ENCODE measurements at regions of chr12 and their contacts with region 1.

Region 1: DNA sequence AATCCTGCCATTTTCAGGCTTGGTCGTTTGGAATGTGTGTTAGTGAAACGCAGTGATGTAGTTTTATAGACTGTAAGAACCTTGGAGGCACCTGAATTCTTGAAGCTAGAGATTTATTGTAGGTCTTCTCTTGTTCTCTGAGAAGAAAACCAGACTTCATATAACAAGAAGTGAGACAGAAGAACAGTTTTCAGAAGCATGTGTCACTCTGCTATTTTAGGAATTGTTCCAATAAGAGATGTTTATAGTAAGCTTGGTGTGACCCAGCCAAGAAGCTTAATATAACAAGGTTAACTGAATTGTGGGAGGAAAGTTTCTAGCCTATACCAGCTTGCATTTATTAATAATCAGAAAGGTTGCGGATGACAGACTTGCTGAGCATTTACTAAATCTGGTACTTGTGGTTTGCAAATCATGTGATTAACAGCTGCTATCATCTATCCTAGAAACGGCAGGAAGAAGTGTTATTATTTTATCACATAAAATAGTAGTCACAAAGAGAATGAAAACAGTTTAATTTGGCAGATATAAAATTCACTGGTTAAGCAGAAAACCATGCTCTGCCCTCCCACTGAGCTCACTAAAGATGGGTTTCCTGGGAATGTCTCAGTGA is 49.2 kb upstream of the BCAT1 start:
- DNase-seq: peak; percentile 77
- ATAC-seq: peak; percentile 79
- H3K4me3 ChIP-seq: peak overlapping the region in 2 of 5 experiments; percentile 1 to 59
- H3K4me3 Mint-ChIP-seq: peak overlapping the region; percentile 64
- H3K27ac ChIP-seq: peak overlapping the region; percentile 79 to 84
- H3K27ac Mint-ChIP-seq: peak overlapping the region; percentile 85
- H3K4me1 ChIP-seq: peaks cover 74 to 76% of the 10 kb centered on the region in 2 donors
- H3K4me1 Mint-ChIP-seq: peaks cover 81% of the 10 kb centered on the region
- H3K27me3 ChIP-seq: no peaks in the 10 kb centered on the region
- H3K27me3 Mint-ChIP-seq: no peaks in the 10 kb centered on the region
- CTCF ChIP-seq: no peak

Region 2: DNA sequence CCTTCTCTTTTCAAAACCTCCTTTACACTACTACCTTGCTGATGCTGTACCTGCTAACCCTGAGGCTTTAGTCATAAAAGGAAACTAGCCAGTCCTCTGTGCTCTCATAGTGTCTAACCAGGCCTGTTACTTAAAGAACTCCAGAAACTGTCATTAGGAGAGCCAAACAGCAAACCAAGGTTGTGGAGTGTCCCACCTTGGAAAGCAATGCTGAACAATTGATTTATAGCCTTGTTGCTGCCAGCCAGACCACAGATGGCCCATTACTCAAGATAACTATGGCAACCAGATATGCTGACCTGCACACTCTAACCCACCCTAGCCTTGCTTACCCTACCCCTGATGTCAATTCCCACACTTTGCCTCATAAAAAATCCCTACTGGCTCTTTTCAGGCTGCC is 22.7 kb before region 1 on chr12:
- CTCF ChIA-PET with region 1: no interaction called
- POLR2A ChIA-PET with region 1: no interaction called
- intact Hi-C with region 1: no loop called
- DNase-seq: no peak
- ATAC-seq: no peak
- H3K4me3 ChIP-seq: no peak overlapping the region
- H3K4me3 Mint-ChIP-seq: no peak overlapping the region
- H3K27ac ChIP-seq: no peak overlapping the region
- H3K27ac Mint-ChIP-seq: no peak overlapping the region
- H3K4me1 ChIP-seq: peaks cover 0 to 7% of the 10 kb centered on the region in 2 donors
- H3K4me1 Mint-ChIP-seq: peaks cover 2% of the 10 kb centered on the region
- H3K27me3 ChIP-seq: no peaks in the 10 kb centered on the region
- H3K27me3 Mint-ChIP-seq: no peaks in the 10 kb centered on the region
- CTCF ChIP-seq: no peak

Region 3: DNA sequence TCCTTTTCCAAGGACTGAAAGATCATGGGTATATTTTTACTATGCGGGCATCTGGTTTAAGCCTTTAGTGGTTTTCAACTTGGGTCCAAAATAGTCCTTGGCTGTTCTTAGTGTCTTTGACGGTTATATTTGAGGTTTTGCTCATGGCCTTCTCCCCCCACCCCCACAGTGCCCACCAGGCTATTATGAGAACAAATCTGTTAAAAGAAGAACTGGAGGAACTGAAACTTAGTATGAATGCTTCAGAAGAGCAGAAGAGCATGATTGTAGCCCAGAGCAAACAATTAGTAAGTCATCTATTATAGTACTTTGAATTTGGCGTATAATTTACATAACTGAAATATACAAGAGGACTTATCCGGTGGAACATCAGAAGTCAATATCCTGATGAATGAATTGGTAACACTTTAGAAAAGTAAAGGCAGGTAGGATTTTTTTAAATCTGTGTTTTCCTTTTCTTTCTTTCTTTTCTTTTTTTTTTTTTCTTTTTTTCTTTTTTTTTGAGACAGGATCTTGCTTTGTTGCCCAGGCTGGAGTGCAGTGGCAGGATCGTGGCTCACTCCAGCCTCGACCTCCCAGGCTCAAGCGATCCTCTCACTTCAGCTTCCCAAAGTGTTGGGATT is 22.7 kb after region 1 on chr12:
- CTCF ChIA-PET with region 1: interaction called, 7 read pairs
- POLR2A ChIA-PET with region 1: interaction called, 3 read pairs
- intact Hi-C with region 1: loop called (anchors 1 kb)
- DNase-seq: peak; percentile 67
- ATAC-seq: peak; percentile 86
- H3K4me3 ChIP-seq: peak overlapping the region in 2 of 5 experiments; percentile 8 to 37
- H3K4me3 Mint-ChIP-seq: peak overlapping the region; percentile 67
- H3K27ac ChIP-seq: peak overlapping the region; percentile 59 to 68
- H3K27ac Mint-ChIP-seq: peak overlapping the region; percentile 81
- H3K4me1 ChIP-seq: peaks cover 69 to 72% of the 10 kb centered on the region in 2 donors
- H3K4me1 Mint-ChIP-seq: peaks cover 58% of the 10 kb centered on the region
- H3K27me3 ChIP-seq: no peaks in the 10 kb centered on the region
- H3K27me3 Mint-ChIP-seq: no peaks in the 10 kb centered on the region
- CTCF ChIP-seq: no peak

Region 4: DNA sequence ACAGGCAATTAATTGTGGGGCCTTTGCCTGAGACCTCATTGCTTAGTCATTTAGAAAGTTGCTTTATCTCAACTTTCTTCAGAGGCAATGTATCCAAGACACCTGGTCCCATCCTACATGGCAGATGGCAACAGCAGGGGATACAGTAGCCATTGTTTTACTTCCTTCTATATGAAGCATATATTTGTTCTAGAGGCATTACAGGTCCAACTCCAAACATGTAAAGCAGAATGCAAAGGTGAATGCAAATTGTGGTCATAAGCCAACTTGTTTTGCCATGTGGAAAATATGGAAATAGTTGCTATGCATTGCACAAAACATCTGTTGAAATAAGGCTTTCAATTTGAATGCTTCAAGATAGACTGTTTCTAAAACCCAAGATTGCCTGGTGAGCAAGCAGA is 60.6 kb after region 1 on chr12:
- CTCF ChIA-PET with region 1: interaction called, 53 read pairs
- POLR2A ChIA-PET with region 1: interaction called, 14 read pairs
- intact Hi-C with region 1: no loop called
- DNase-seq: peak; percentile 40
- ATAC-seq: peak; percentile 40
- H3K4me3 ChIP-seq: peak overlapping the region in 2 of 5 experiments; percentile 17 to 36
- H3K4me3 Mint-ChIP-seq: peak overlapping the region; percentile 79
- H3K27ac ChIP-seq: peak overlapping the region in 1 of 2 donors; percentile 65
- H3K27ac Mint-ChIP-seq: peak overlapping the region; percentile 85
- H3K4me1 ChIP-seq: peaks cover 63 to 71% of the 10 kb centered on the region in 2 donors
- H3K4me1 Mint-ChIP-seq: peaks cover 82% of the 10 kb centered on the region
- H3K27me3 ChIP-seq: no peaks in the 10 kb centered on the region
- H3K27me3 Mint-ChIP-seq: no peaks in the 10 kb centered on the region
- CTCF ChIP-seq: no peak